ENCODE measurements at regions of chr13 and their contacts with region 1.

Region 1: DNA sequence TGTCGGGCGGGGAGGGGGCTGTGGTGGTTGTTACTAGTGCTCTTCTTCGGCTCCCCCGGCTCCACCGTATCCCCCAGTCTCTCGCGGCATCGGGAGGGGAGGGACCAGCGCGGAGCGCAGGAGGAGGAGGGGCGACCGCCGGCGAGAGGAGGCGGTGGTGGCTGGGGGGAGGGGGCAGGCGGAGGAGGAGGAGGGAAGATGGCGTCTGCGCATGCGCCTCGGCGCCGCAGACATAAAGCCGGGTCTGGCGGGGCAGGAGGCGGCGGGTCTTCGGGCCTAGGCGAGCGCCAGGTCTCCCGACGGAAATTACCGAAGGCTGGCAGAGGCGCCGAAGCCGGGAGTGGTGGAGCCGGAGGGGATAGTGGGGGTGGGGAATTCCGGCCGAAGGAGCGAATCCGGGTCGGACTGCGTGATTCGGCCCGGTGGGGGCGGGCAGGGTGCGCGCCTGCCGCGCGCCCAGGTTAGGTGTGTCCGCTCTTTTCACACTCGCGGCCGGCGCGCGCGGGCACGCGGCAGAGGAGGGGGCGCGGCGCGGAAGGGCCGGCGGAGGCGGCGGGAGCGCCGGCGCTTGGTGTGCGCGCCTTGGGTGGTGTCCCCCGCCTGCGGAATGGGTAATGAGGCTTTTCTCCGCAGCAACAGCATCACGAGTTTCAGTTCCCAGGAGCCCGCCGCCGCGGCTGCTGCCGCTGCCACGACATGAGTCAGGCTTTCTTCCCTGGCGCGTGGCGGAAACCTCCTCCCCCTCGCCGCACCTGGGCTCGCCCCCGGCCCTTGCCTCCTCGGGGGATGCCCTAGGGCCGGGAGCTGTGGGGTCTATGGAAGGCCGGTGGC is 1.3 kb upstream of the TSC22D1 start:
- DNase-seq: peak; percentile 91
- ATAC-seq: peak; percentile 72
- H3K4me3 Mint-ChIP-seq: peak overlapping the region; percentile 93
- H3K27ac Mint-ChIP-seq: peak overlapping the region; percentile 90
- H3K4me1 Mint-ChIP-seq: peaks cover 23% of the 10 kb centered on the region
- H3K27me3 Mint-ChIP-seq: no peaks in the 10 kb centered on the region
- CTCF ChIP-seq: no peak

Region 2: DNA sequence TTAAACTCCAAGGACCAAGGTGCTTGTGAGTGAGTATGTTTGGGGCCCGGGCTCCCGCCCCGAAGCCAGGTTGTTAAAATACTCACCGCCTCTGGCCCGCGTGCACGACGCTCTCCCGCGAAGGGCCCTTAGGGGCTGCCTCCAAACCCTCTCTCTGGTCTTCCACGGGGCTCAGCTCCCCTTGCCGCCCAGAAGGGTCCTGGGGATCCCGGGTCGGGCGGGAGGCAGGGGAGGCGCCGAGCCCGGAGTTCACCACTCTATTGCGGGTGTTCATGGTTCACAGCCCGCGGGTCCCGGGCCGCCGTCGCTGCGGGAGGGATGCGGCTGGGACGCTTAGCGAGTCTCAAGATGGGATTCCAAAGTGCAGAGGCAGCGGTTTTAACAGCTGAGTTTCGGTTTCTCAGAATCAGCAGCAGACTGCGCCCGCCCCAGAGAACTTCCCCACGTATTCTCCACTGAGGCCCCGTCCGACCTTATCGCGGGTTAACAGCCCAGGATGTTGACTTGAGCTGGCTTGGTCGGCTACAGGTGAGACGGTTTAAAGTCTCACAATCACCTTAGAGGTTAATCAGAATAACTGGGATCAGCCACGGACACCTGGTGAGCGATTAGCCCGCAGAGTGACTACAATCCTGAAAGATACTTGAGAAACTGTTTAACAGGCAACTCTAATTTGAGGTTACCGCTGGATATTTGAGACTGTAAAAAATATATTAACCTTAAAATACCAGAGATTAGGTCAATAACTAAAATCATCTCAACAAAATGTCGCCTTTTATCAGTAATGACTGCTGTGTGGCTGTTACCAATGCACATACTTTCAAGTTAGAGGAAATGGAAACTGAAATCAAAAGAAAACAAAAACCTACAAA is 1585.3 kb before region 1 on chr13 and contains the start of gene EPSTI1:
- CTCF ChIA-PET with region 1: no interaction called
- POLR2A ChIA-PET with region 1: no interaction called
- intact Hi-C with region 1: loop called (anchors 2 kb)
- DNase-seq: peak; percentile 69
- ATAC-seq: peak; percentile 85
- H3K4me3 Mint-ChIP-seq: peak within 1 kb of the TSS; percentile 92
- H3K27ac Mint-ChIP-seq: peak within 1 kb of the TSS; percentile 99
- H3K4me1 Mint-ChIP-seq: peaks cover 58% of the 10 kb centered on the region
- H3K27me3 Mint-ChIP-seq: no peaks in the 10 kb centered on the region
- CTCF ChIP-seq: no peak
- total RNA-seq, gene EPSTI1: 30.6 and 32.8 TPM in 2 replicates

Region 3: GRCh38 chr13:44141725-44142539 is 435.5 kb before region 1 on chr13:
- CTCF ChIA-PET with region 1: no interaction called
- POLR2A ChIA-PET with region 1: no interaction called
- intact Hi-C with region 1: loop called (anchors 1 kb)
- DNase-seq: peak; percentile 100
- ATAC-seq: peak; percentile 99
- H3K4me3 Mint-ChIP-seq: peak overlapping the region; percentile 93
- H3K27ac Mint-ChIP-seq: peak overlapping the region; percentile 86
- H3K4me1 Mint-ChIP-seq: peaks cover 29% of the 10 kb centered on the region
- H3K27me3 Mint-ChIP-seq: peaks cover 8% of the 10 kb centered on the region
- CTCF ChIP-seq: no peak

Region 4: GRCh38 chr13:44218501-44219240 is 358.8 kb before region 1 on chr13:
- CTCF ChIA-PET with region 1: no interaction called
- POLR2A ChIA-PET with region 1: no interaction called
- intact Hi-C with region 1: no loop called
- DNase-seq: no peak
- ATAC-seq: no peak
- H3K4me3 Mint-ChIP-seq: no peak overlapping the region
- H3K27ac Mint-ChIP-seq: no peak overlapping the region
- H3K4me1 Mint-ChIP-seq: no peaks in the 10 kb centered on the region
- H3K27me3 Mint-ChIP-seq: peaks cover 13% of the 10 kb centered on the region
- CTCF ChIP-seq: no peak

Region 5: DNA sequence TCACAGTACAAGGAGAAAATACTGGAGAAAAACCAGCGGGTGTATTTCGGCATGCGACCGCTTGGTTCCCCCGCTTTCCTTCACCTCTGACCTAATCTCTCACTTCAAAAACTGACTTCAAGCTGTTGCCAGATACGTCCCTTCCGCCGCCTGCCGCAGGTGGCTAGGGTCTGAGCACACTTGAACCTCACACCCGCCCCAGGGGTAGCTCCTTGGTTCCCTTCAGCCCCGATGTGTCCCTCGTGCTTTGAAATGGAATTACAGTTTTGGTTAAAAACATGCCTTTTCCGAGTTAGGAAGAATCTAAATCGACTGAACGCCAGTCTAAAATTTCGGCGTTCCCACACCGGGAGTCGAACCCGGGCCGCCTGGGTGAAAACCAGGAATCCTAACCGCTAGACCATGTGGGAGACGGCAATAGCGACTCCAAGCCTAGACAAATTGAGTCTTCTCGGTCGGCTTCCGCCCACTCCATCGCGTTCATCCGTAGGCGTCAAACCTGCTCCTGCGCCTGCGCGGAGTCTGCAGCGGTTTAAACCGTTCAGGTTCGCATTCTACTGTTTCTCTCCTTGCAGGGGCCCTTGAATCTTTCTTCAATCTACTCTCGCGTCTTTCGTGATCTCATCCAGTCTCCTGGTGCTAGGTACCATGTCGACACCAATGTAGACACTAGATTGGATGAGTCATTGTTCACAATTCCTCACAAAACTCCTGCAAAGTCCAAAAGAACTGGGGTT is 340.3 kb after region 1 on chr13:
- CTCF ChIA-PET with region 1: no interaction called
- POLR2A ChIA-PET with region 1: interaction called, 4 read pairs
- intact Hi-C with region 1: loop called (anchors 1 kb)
- DNase-seq: peak; percentile 96
- ATAC-seq: peak; percentile 77
- H3K4me3 Mint-ChIP-seq: no peak overlapping the region
- H3K27ac Mint-ChIP-seq: no peak overlapping the region
- H3K4me1 Mint-ChIP-seq: peaks cover 2% of the 10 kb centered on the region
- H3K27me3 Mint-ChIP-seq: no peaks in the 10 kb centered on the region
- CTCF ChIP-seq: no peak

Region 6: GRCh38 chr13:45119991-45120864 is 542.8 kb after region 1 on chr13 and contains the start of gene GTF2F2:
- CTCF ChIA-PET with region 1: no interaction called
- POLR2A ChIA-PET with region 1: no interaction called
- intact Hi-C with region 1: loop called (anchors 1 kb)
- DNase-seq: peak; percentile 90
- ATAC-seq: peak; percentile 82
- H3K4me3 Mint-ChIP-seq: no peak within 1 kb of the TSS
- H3K27ac Mint-ChIP-seq: no peak within 1 kb of the TSS
- H3K4me1 Mint-ChIP-seq: peaks cover 9% of the 10 kb centered on the region
- H3K27me3 Mint-ChIP-seq: no peaks in the 10 kb centered on the region
- CTCF ChIP-seq: no peak
- total RNA-seq, gene GTF2F2: 19.4 and 19.8 TPM in 2 replicates

Region 7: DNA sequence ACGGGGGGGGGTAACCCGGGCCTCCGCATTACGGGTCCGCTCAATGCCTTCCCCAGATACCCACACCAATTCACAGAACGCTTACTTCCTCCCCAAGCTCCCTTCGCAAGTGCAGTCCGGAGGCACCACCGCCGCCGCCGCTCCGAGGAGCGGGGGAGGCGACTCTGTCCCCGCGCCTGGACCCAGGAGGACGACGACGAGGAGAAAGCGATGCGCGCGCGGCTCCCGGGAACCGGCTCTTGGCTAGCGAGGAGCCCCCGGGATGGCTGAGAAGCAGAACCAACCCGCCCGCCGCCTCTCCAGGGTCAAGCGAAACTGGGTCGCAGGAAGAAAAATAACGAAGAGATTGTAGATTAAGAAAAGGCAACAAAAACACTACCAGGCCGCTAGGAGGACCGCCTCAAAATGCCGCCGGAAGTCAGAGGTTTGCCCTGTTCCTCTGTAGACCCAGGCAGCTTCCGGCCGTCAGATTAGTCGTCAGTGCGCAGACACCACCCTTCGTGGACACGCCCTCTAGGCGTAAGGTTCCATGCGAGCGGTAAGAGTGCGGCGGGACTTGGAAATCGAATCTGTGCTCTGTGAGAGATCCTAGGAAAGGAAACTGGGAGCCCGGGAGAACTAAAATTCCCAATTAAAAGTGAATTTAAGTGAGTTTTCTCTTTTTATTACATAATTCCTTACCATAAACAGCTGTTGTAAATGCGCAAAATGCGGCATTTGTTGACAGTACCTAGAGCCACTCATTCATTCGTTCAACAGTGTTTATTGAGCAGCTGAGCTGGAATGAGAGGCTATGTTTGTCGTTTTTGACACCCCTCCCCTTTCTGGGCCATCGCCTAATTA is 1475.1 kb after region 1 on chr13 and contains the start of gene ZC3H13:
- CTCF ChIA-PET with region 1: no interaction called
- POLR2A ChIA-PET with region 1: no interaction called
- intact Hi-C with region 1: loop called (anchors 10 kb)
- DNase-seq: peak; percentile 76
- ATAC-seq: peak; percentile 99
- H3K4me3 Mint-ChIP-seq: peak within 1 kb of the TSS; percentile 95
- H3K27ac Mint-ChIP-seq: peak within 1 kb of the TSS; percentile 96
- H3K4me1 Mint-ChIP-seq: peaks cover 39% of the 10 kb centered on the region
- H3K27me3 Mint-ChIP-seq: peaks cover 1% of the 10 kb centered on the region
- CTCF ChIP-seq: no peak
- total RNA-seq, gene ZC3H13: 48.1 and 48.7 TPM in 2 replicates